Activated naive CD4-positive, alpha-beta T cell treated with anti-CD3 and anti-CD28 coated beads, Interleukin-2, amount 10 ng/mL, durations not matched to agents 7 days and 5 days (primary cell): ENCODE measurements at regions of chr13 and their contacts with region 1.

Region 1: DNA sequence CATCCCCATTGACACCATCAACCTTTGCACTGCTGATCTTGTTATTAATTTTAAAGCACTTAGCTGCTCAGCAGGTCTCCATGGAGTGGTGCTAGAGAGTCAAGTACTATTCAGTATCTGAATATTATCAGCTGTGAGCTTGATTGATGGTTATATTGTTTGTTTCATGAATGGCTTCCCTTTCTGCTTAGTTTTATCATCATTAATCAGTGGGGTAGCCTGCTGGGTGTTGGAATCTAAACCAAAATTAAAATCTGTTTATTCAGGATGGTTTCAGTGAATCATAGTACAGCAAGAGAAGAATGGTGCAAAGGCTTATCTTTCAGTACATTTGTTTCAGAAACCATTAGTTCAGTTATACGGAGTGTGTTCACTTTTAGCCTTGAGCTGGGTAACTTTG is 42.5 kb upstream of the SCEL start:
- DNase-seq: no peak
- H3K4me3 Mint-ChIP-seq: no peak overlapping the region
- H3K27ac Mint-ChIP-seq: no peak overlapping the region
- H3K4me1 Mint-ChIP-seq: no peaks in the 10 kb centered on the region
- H3K27me3 Mint-ChIP-seq: no peaks in the 10 kb centered on the region

Region 2: DNA sequence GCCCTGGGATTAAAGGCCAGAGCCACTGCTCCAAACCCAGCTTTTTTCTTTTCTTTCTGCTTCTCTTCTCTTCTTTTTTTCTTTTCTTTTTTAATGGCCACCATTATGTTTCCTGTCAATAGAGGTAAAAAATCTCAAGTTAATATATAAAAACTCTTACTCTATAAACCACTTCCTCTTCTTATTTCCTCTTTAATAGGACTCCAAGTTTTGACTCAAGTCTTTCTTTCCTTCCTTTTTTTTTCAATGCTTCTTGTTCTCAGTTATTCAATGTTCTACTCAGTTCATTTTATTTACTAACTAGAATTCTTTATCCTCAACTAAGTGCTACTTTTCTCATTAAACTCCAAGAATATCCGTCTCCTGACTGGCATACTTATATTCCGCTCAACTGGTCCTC is 139.0 kb before region 1 on chr13:
- CTCF ChIA-PET with region 1: no interaction called
- DNase-seq: no peak
- H3K4me3 Mint-ChIP-seq: no peak overlapping the region
- H3K27ac Mint-ChIP-seq: peak overlapping the region; percentile 19
- H3K4me1 Mint-ChIP-seq: peaks cover 8% of the 10 kb centered on the region
- H3K27me3 Mint-ChIP-seq: peaks cover 9% of the 10 kb centered on the region

Region 3: GRCh38 chr13:77565635-77566034 is 72.7 kb after region 1 on chr13:
- CTCF ChIA-PET with region 1: interaction called, 12 read pairs
- DNase-seq: no peak
- H3K4me3 Mint-ChIP-seq: no peak overlapping the region
- H3K27ac Mint-ChIP-seq: no peak overlapping the region
- H3K4me1 Mint-ChIP-seq: no peaks in the 10 kb centered on the region
- H3K27me3 Mint-ChIP-seq: peaks cover 9% of the 10 kb centered on the region

Region 4: GRCh38 chr13:77751513-77752456 is 258.8 kb after region 1 on chr13:
- CTCF ChIA-PET with region 1: interaction called, 15 read pairs
- DNase-seq: peak; percentile 58
- H3K4me3 Mint-ChIP-seq: no peak overlapping the region
- H3K27ac Mint-ChIP-seq: no peak overlapping the region
- H3K4me1 Mint-ChIP-seq: peaks cover 6% of the 10 kb centered on the region
- H3K27me3 Mint-ChIP-seq: no peaks in the 10 kb centered on the region